Endothelial cell of umbilical vein (primary cell): ENCODE measurements at regions of chr21 and their contacts with region 1.

Region 1: GRCh38 chr21:33441489-33442477 is 38.0 kb downstream of the TMEM50B start:
- DNase-seq: no peak
- H3K4me3 ChIP-seq: no peak overlapping the region
- H3K27ac ChIP-seq: no peak overlapping the region
- H3K4me1 ChIP-seq: no peaks in the 10 kb centered on the region
- H3K27me3 ChIP-seq: no peaks in the 10 kb centered on the region
- CTCF ChIP-seq: no peak
- POLR2A ChIP-seq: no peak

Region 2: GRCh38 chr21:31900121-31900895 is 1541.5 kb before region 1 on chr21:
- CTCF ChIA-PET with region 1: no interaction called
- POLR2A ChIA-PET with region 1: no interaction called
- dilution Hi-C with region 1: no loop called
- intact Hi-C with region 1: no loop called
- DNase-seq: no peak
- H3K4me3 ChIP-seq: no peak overlapping the region
- H3K27ac ChIP-seq: no peak overlapping the region
- H3K4me1 ChIP-seq: no peaks in the 10 kb centered on the region
- H3K27me3 ChIP-seq: no peaks in the 10 kb centered on the region
- CTCF ChIP-seq: no peak
- POLR2A ChIP-seq: no peak

Region 3: GRCh38 chr21:33266050-33266788 is 175.6 kb before region 1 on chr21 and contains the start of gene IL10RB:
- CTCF ChIA-PET with region 1: no interaction called
- POLR2A ChIA-PET with region 1: interaction called, 4 read pairs
- dilution Hi-C with region 1: no loop called
- intact Hi-C with region 1: loop called (anchors 1 kb)
- DNase-seq: peak; percentile 72
- H3K4me3 ChIP-seq: peak within 1 kb of the TSS; percentile 77 to 88 (median 84)
- H3K27ac ChIP-seq: peak within 1 kb of the TSS; percentile 54
- H3K4me1 ChIP-seq: peaks cover 10% of the 10 kb centered on the region
- H3K27me3 ChIP-seq: no peaks in the 10 kb centered on the region
- CTCF ChIP-seq: no peak
- POLR2A ChIP-seq: no peak
- total RNA-seq, gene IL10RB: 21.7 and 21.9 TPM in 2 replicates

Region 4: GRCh38 chr21:33348706-33349105 is 93.1 kb before region 1 on chr21:
- CTCF ChIA-PET with region 1: interaction called, 10 read pairs
- POLR2A ChIA-PET with region 1: no interaction called
- dilution Hi-C with region 1: no loop called
- intact Hi-C with region 1: loop called (anchors 1 kb)
- DNase-seq: peak; percentile 81
- H3K4me3 ChIP-seq: no peak overlapping the region
- H3K27ac ChIP-seq: peak overlapping the region; percentile 43
- H3K4me1 ChIP-seq: peaks cover 8% of the 10 kb centered on the region
- H3K27me3 ChIP-seq: no peaks in the 10 kb centered on the region
- CTCF ChIP-seq: no peak
- POLR2A ChIP-seq: no peak

Region 5: GRCh38 chr21:33374450-33375096 is 67.2 kb before region 1 on chr21:
- CTCF ChIA-PET with region 1: interaction called, 4 read pairs
- POLR2A ChIA-PET with region 1: no interaction called
- dilution Hi-C with region 1: no loop called
- intact Hi-C with region 1: loop called (anchors 1 kb)
- DNase-seq: peak; percentile 84
- H3K4me3 ChIP-seq: no peak overlapping the region
- H3K27ac ChIP-seq: no peak overlapping the region
- H3K4me1 ChIP-seq: peaks cover 15% of the 10 kb centered on the region
- H3K27me3 ChIP-seq: no peaks in the 10 kb centered on the region
- CTCF ChIP-seq: peak; percentile 54 to 60
- POLR2A ChIP-seq: no peak

Region 6: DNA sequence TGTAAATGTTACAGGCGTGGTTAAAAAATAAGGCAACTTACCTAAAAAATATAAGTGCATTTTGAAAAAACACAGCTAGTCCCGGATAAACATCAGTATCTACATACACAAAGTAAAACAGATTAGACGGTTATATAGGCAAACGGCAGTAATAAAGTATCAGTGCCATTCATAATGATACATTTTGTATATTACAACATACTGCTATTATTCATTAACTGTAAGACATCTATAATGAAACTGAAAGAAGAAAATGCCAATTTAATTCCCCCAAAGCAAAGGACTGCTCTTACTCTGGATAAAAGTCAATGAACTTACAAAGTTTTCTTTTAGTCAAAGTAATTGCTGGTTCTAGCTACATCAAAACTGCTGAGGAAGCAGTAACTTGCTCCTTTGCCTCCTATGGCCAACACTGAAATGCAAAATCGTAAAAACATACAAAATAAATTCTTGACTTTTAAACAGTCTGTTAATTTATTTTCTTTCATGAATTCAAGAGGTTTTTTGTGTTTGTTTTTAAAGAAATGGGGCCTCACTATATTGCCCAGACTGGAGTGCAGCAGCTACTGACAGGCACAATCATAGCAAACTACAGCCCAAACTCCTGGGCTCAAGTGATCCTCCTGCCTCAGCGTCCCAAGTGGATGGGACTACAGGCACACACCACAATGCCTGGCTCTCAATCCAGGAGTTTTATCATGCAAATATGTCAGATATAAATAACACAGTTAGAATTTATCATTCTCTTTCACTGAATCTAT is 14.1 kb after region 1 on chr21:
- CTCF ChIA-PET with region 1: interaction called, 12 read pairs
- POLR2A ChIA-PET with region 1: no interaction called
- dilution Hi-C with region 1: no loop called
- intact Hi-C with region 1: no loop called
- DNase-seq: no peak
- H3K4me3 ChIP-seq: no peak overlapping the region
- H3K27ac ChIP-seq: no peak overlapping the region
- H3K4me1 ChIP-seq: no peaks in the 10 kb centered on the region
- H3K27me3 ChIP-seq: no peaks in the 10 kb centered on the region
- CTCF ChIP-seq: no peak
- POLR2A ChIP-seq: no peak

Region 7: GRCh38 chr21:33479679-33480480 is 38.1 kb after region 1 on chr21 and contains the start of gene TMEM50B:
- CTCF ChIA-PET with region 1: interaction called, 15 read pairs
- POLR2A ChIA-PET with region 1: no interaction called
- dilution Hi-C with region 1: no loop called
- intact Hi-C with region 1: no loop called
- DNase-seq: peak; percentile 98
- H3K4me3 ChIP-seq: peak within 1 kb of the TSS; percentile 83 to 95 (median 91)
- H3K27ac ChIP-seq: peak within 1 kb of the TSS; percentile 72
- H3K4me1 ChIP-seq: peaks cover 4% of the 10 kb centered on the region
- H3K27me3 ChIP-seq: peaks cover 3% of the 10 kb centered on the region in 2 experiments
- CTCF ChIP-seq: peak; percentile 27 to 59
- POLR2A ChIP-seq: peak; percentile 94
- total RNA-seq, gene TMEM50B: 29.3 and 29.7 TPM in 2 replicates